Testis (tissue), 5 donors: ENCODE measurements at regions of chr16 and their contacts with region 1.

Region 1: GRCh38 chr16:2023098-2023925 is 3.4 kb upstream of the NHERF2 start:
- DNase-seq: peak; percentile 95
- H3K4me3 ChIP-seq: peak overlapping the region; percentile 7 to 37
- H3K27ac ChIP-seq: peak overlapping the region in 1 of 2 donors; percentile 73
- H3K4me1 ChIP-seq: peaks cover 26% of the 10 kb centered on the region
- H3K27me3 ChIP-seq: no peaks in the 10 kb centered on the region
- CTCF ChIP-seq: peak; percentile 95 to 99 (median 97)
- POLR2A ChIP-seq: no peak

Region 2: GRCh38 chr16:1677802-1678496 is 345.4 kb before region 1 on chr16 and contains the start of gene JPT2:
- intact Hi-C with region 1: no loop called
- DNase-seq: peak; percentile 99
- H3K4me3 ChIP-seq: peak within 1 kb of the TSS; percentile 67 to 79
- H3K27ac ChIP-seq: peak within 1 kb of the TSS; percentile 36 to 77
- H3K4me1 ChIP-seq: peaks cover 4% of the 10 kb centered on the region
- H3K27me3 ChIP-seq: no peaks in the 10 kb centered on the region
- CTCF ChIP-seq: no peak
- POLR2A ChIP-seq: no peak
- total RNA-seq, gene JPT2: 25.8 to 27.9 TPM

Region 3: GRCh38 chr16:1950047-1950446 is 73.3 kb before region 1 on chr16:
- intact Hi-C with region 1: no loop called
- DNase-seq: no peak
- H3K4me3 ChIP-seq: no peak overlapping the region
- H3K27ac ChIP-seq: no peak overlapping the region
- H3K4me1 ChIP-seq: no peaks in the 10 kb centered on the region
- H3K27me3 ChIP-seq: no peaks in the 10 kb centered on the region
- CTCF ChIP-seq: no peak
- POLR2A ChIP-seq: no peak

Region 4: DNA sequence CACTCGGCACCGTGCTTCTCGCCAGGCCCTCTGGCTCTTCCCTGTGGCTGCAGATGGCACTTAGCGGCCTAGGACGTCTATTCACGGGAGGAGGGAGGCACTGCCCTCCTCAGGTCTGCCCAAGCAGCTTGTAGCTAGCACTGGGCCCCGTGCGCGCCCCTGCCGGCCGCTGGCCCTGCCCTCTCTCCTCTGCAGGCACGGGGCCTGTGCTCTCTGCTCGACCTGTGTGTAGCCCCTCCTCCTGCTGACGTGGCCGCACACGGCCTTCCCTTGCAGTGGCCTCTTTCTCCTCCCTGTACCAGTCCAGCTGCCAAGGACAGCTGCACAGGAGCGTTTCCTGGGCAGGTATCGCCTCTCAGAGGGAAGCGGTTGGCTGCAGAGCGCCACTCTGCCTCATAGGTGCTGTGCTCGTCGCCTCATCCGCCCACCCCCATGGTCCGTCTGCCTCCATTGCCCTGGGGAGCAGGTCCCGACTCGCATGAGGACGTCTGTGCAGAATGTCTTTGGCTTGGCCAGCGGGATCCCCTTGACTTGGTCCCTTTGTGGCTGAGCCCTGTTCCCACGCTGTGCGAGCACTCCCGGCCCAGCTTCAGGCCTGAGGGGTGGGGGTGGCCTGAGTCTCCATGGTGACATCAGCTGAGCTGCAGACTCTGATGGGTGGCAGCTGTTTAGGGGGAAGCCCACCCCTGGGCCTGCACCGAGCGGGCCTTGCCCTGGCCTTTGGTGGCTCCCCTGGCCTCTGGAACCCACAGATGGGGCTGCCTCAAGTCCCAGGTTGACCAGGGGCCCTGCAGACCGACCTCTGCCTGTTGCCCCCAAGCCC is 59.1 kb after region 1 on chr16:
- intact Hi-C with region 1: loop called (anchors 10 kb)
- DNase-seq: peak; percentile 77
- H3K4me3 ChIP-seq: no peak overlapping the region
- H3K27ac ChIP-seq: peak overlapping the region; percentile 48 to 54
- H3K4me1 ChIP-seq: peaks cover 12% of the 10 kb centered on the region
- H3K27me3 ChIP-seq: no peaks in the 10 kb centered on the region
- CTCF ChIP-seq: peak in 1 of 3 experiments; percentile 5
- POLR2A ChIP-seq: no peak

Region 5: DNA sequence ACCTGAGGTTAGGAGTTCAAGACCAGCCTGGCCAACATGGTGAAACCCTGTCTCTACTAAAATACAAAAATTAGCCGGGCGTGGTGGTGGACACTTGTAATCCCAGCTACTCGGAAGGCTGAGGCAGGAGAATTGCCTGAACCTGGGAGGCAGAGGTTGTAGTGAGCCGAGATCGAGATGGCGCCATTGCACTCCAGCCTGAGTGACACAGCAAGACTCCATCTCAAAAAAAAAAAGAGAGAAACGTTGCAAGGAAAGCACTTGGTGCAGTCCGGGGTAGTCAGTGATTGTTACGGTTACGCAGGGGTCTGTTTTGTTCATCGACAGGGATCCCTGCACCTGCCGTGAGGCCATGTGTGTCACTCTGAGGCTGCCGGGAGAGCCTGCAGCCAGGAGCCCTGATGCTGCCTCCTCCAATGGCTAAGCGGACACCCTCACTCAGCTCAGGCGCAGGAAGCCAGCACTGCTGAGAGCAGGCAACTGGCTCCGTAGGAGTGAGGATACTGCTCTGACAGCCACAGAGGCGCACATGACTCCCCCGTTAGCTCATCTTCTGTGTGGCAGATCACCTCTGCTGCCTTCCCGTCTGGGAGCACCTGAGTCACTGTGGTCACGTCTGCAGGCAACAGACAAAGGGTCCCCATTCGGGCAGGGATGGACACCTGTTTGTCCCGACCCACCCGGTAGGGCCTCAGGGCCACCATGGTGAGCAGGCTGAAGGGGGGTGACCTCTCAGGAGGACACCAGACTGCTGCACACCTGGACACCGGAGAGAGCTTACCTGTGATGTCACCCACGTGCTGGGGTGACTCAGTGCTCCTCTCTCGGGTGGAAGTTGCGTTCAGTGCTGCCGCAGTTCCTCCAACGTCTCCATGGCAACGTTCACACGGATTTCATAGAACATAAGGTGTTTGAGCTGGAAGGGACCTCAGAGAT is 119.9 kb after region 1 on chr16:
- intact Hi-C with region 1: loop called (anchors 5 kb)
- DNase-seq: no peak
- H3K4me3 ChIP-seq: no peak overlapping the region
- H3K27ac ChIP-seq: no peak overlapping the region
- H3K4me1 ChIP-seq: peaks cover 6% of the 10 kb centered on the region
- H3K27me3 ChIP-seq: no peaks in the 10 kb centered on the region
- CTCF ChIP-seq: no peak
- POLR2A ChIP-seq: no peak